Dorsolateral prefrontal cortex (tissue), 120 donors: ENCODE measurements at regions of chr21 and their contacts with region 1.

Region 1: DNA sequence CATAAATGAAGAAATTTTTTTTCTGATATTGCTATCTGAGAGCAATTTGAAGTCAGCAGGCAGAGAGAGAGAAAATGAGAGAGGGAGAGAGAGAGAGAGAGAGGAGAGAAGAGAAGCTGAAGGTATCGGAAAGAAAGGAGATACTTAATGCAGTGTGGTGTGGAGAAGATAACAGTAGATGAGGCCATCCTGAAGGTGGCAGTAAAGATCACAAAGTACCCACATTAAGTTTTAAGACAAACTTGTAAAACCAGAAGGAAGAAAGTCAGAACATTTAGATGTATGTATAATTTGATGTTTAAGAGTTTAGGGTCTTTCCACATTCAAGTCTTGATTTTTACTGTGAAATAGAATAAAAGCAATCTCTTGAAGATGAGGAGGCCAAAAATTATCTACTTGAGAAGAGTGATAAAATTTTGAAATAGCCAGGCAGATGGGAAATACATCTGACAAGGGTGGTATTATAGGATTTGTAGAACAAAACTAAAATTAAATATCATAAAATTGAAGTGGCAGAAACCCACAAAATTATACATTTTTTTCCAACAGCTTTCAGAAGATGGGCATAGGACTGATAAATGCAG is 1753.4 kb downstream of the MRPL39 start:
- DNase-seq: no peak
- H3K4me3 ChIP-seq: no peak overlapping the region
- H3K27ac ChIP-seq: no peak overlapping the region
- H3K27me3 ChIP-seq: peaks cover 0 to 6% (median 0%) of the 10 kb centered on the region in 45 donors
- CTCF ChIP-seq: peak; percentile 25 to 82 (median 66)

Region 2: GRCh38 chr21:23921670-23922418 is 68.0 kb after region 1 on chr21:
- intact Hi-C with region 1: no loop called
- DNase-seq: no peak
- H3K4me3 ChIP-seq: no peak overlapping the region
- H3K27ac ChIP-seq: no peak overlapping the region
- H3K27me3 ChIP-seq: no peaks in the 10 kb centered on the region
- CTCF ChIP-seq: no peak

Region 3: GRCh38 chr21:24514081-24514733 is 660.3 kb after region 1 on chr21:
- intact Hi-C with region 1: loop called (anchors 5 to 10 kb)
- DNase-seq: no peak
- H3K4me3 ChIP-seq: peak overlapping the region in 11 of 59 donors; percentile 1 to 53 (median 19)
- H3K27ac ChIP-seq: peak overlapping the region in 9 of 59 donors; percentile 7 to 61 (median 14)
- H3K27me3 ChIP-seq: no peaks in the 10 kb centered on the region
- CTCF ChIP-seq: peak; percentile 58 to 95 (median 76)